ENCODE measurements at regions of chr3 and their contacts with region 1.

Region 1: DNA sequence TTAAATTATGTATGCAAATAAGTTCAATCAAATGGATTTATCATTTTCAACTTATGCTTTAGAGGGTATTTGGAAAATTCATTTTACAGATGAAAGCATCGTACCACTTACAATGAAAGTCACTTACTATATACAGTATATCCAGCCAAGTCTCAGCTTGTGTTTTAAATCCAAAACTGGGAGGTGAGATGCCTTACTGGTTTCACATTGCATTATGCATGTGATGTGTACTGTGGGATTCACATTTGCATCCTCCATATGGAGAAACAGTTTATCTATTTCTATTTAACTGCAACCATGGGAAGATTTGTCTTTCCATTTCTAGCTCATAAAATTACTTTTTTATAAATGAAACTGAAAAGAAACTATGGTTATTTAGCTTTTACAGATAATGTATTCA is 248.1 kb downstream of the CNTN3 start:
- DNase-seq: no peak
- ATAC-seq: no peak
- H3K4me3 ChIP-seq: no peak overlapping the region
- H3K27ac ChIP-seq: no peak overlapping the region
- H3K4me1 ChIP-seq: no peaks in the 10 kb centered on the region
- H3K27me3 ChIP-seq: no peaks in the 10 kb centered on the region
- CTCF ChIP-seq: no peak

Region 2: DNA sequence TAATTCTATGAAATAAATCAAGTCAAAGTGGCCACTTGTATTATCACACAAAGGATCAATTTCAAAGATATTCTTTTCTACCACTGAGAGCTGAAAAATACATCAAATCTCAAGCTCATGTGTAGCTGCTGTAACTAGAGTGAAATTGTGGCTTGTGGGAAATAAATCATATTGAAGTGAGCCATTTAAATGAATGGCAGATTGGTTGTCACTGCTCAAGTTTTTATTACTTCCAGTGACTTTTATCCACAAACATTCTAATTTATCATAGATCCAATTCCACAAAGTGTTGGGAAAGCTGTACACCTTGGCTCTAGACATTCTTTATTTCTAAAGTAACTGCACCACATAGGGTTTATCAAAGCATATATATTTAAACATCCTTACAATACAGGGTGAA is 37.2 kb before region 1 on chr3:
- CTCF ChIA-PET with region 1: no interaction called
- POLR2A ChIA-PET with region 1: no interaction called
- in situ Hi-C with region 1: no loop called
- intact Hi-C with region 1: no loop called
- DNase-seq: no peak
- ATAC-seq: no peak
- H3K4me3 ChIP-seq: no peak overlapping the region
- H3K27ac ChIP-seq: no peak overlapping the region
- H3K4me1 ChIP-seq: no peaks in the 10 kb centered on the region
- H3K27me3 ChIP-seq: no peaks in the 10 kb centered on the region
- CTCF ChIP-seq: no peak

Region 3: GRCh38 chr3:74384159-74384558 is 17.8 kb after region 1 on chr3:
- CTCF ChIA-PET with region 1: no interaction called
- POLR2A ChIA-PET with region 1: no interaction called
- in situ Hi-C with region 1: no loop called
- intact Hi-C with region 1: loop called (anchors 2 kb)
- DNase-seq: no peak
- ATAC-seq: no peak
- H3K4me3 ChIP-seq: no peak overlapping the region
- H3K27ac ChIP-seq: no peak overlapping the region
- H3K4me1 ChIP-seq: no peaks in the 10 kb centered on the region
- H3K27me3 ChIP-seq: no peaks in the 10 kb centered on the region
- CTCF ChIP-seq: no peak